ENCODE measurements at regions of chr9 and their contacts with region 1.

Region 1: GRCh38 chr9:5186416-5187169 is 1.2 kb upstream of the INSL6 start:
- DNase-seq: peak; percentile 31 to 84 (median 61)
- ATAC-seq: peak; percentile 94
- H3K4me3 ChIP-seq: no peak overlapping the region
- H3K4me3 Mint-ChIP-seq: no peak overlapping the region
- H3K27ac ChIP-seq: no peak overlapping the region
- H3K27ac Mint-ChIP-seq: no peak overlapping the region
- H3K4me1 ChIP-seq: no peaks in the 10 kb centered on the region
- H3K4me1 Mint-ChIP-seq: peaks cover 6% of the 10 kb centered on the region
- H3K27me3 ChIP-seq: no peaks in the 10 kb centered on the region
- H3K27me3 Mint-ChIP-seq: no peaks in the 10 kb centered on the region
- CTCF ChIP-seq: peak; percentile 76

Region 2: DNA sequence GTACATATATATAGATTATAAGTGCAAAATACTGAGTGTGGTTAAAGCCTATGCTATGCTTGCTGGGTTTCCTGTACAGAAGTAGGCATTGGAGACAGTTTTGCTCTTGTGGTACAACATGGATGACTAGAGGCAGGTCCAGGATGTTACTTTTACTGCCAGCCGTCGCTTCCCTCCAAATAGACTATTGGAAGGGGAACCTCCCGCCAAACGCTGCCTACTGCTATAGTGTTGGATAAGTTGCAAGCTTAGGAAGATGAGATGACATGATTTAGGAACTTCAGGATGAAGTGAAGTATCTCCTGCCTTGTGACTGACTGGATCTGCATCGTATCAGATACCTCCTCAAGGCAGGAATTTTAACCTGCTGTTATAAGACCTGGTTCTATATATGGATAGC is 170.7 kb before region 1 on chr9:
- CTCF ChIA-PET with region 1: no interaction called
- POLR2A ChIA-PET with region 1: no interaction called
- intact Hi-C with region 1: no loop called
- DNase-seq: no peak
- ATAC-seq: no peak
- H3K4me3 ChIP-seq: no peak overlapping the region
- H3K4me3 Mint-ChIP-seq: no peak overlapping the region
- H3K27ac ChIP-seq: no peak overlapping the region
- H3K27ac Mint-ChIP-seq: no peak overlapping the region
- H3K4me1 ChIP-seq: no peaks in the 10 kb centered on the region
- H3K4me1 Mint-ChIP-seq: peaks cover 19% of the 10 kb centered on the region
- H3K27me3 ChIP-seq: no peaks in the 10 kb centered on the region
- H3K27me3 Mint-ChIP-seq: no peaks in the 10 kb centered on the region
- CTCF ChIP-seq: no peak

Region 3: GRCh38 chr9:5089737-5090136 is 96.9 kb before region 1 on chr9:
- CTCF ChIA-PET with region 1: no interaction called
- POLR2A ChIA-PET with region 1: no interaction called
- intact Hi-C with region 1: no loop called
- DNase-seq: no peak
- ATAC-seq: no peak
- H3K4me3 ChIP-seq: no peak overlapping the region
- H3K4me3 Mint-ChIP-seq: no peak overlapping the region
- H3K27ac ChIP-seq: no peak overlapping the region
- H3K27ac Mint-ChIP-seq: no peak overlapping the region
- H3K4me1 ChIP-seq: no peaks in the 10 kb centered on the region
- H3K4me1 Mint-ChIP-seq: no peaks in the 10 kb centered on the region
- H3K27me3 ChIP-seq: no peaks in the 10 kb centered on the region
- H3K27me3 Mint-ChIP-seq: no peaks in the 10 kb centered on the region
- CTCF ChIP-seq: no peak

Region 4: GRCh38 chr9:5326893-5327548 is 140.4 kb after region 1 on chr9:
- CTCF ChIA-PET with region 1: interaction called, 12 read pairs
- POLR2A ChIA-PET with region 1: interaction called, 3 read pairs
- intact Hi-C with region 1: no loop called
- DNase-seq: peak in 8 of 9 experiments; percentile 26 to 85 (median 60)
- ATAC-seq: peak; percentile 96
- H3K4me3 ChIP-seq: peak overlapping the region in 1 of 2 experiments; percentile 13
- H3K4me3 Mint-ChIP-seq: peak overlapping the region; percentile 61
- H3K27ac ChIP-seq: peak overlapping the region in 1 of 2 experiments; percentile 31
- H3K27ac Mint-ChIP-seq: peak overlapping the region; percentile 89
- H3K4me1 ChIP-seq: peaks cover 10% of the 10 kb centered on the region
- H3K4me1 Mint-ChIP-seq: peaks cover 49% of the 10 kb centered on the region
- H3K27me3 ChIP-seq: no peaks in the 10 kb centered on the region
- H3K27me3 Mint-ChIP-seq: no peaks in the 10 kb centered on the region
- CTCF ChIP-seq: no peak

Region 5: GRCh38 chr9:5425006-5425628 is 238.5 kb after region 1 on chr9:
- CTCF ChIA-PET with region 1: interaction called, 87 read pairs
- POLR2A ChIA-PET with region 1: interaction called, 5 read pairs
- intact Hi-C with region 1: loop called (anchors 1 kb)
- DNase-seq: peak in 2 of 9 experiments; percentile 56 to 65
- ATAC-seq: peak; percentile 59
- H3K4me3 ChIP-seq: no peak overlapping the region
- H3K4me3 Mint-ChIP-seq: no peak overlapping the region
- H3K27ac ChIP-seq: no peak overlapping the region
- H3K27ac Mint-ChIP-seq: no peak overlapping the region
- H3K4me1 ChIP-seq: no peaks in the 10 kb centered on the region
- H3K4me1 Mint-ChIP-seq: peaks cover 9% of the 10 kb centered on the region
- H3K27me3 ChIP-seq: no peaks in the 10 kb centered on the region
- H3K27me3 Mint-ChIP-seq: no peaks in the 10 kb centered on the region
- CTCF ChIP-seq: peak; percentile 88

Region 6: DNA sequence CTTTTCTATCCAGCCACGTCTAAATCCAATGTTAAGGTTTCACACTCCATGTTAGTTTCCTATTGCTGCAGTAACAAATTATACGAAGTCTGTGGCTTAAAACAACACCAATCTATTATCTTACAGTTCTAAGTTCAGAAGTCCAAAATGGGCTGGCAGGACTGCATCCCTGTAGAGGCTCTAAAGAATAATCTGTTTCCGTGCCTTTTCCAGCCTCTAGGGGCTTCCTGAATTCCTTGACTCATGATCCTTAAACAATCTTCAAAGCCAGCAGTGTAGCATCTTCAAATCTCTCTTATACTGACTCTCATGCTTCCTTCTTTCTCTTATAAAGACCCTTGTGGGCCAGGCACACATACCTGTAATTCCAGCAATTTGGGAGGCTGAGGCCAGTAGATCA is 244.3 kb after region 1 on chr9:
- CTCF ChIA-PET with region 1: interaction called, 97 read pairs
- POLR2A ChIA-PET with region 1: interaction called, 5 read pairs
- intact Hi-C with region 1: no loop called
- DNase-seq: no peak
- ATAC-seq: no peak
- H3K4me3 ChIP-seq: no peak overlapping the region
- H3K4me3 Mint-ChIP-seq: no peak overlapping the region
- H3K27ac ChIP-seq: no peak overlapping the region
- H3K27ac Mint-ChIP-seq: no peak overlapping the region
- H3K4me1 ChIP-seq: no peaks in the 10 kb centered on the region
- H3K4me1 Mint-ChIP-seq: peaks cover 9% of the 10 kb centered on the region
- H3K27me3 ChIP-seq: no peaks in the 10 kb centered on the region
- H3K27me3 Mint-ChIP-seq: no peaks in the 10 kb centered on the region
- CTCF ChIP-seq: no peak

Region 7: GRCh38 chr9:5582835-5583195 is 396.2 kb after region 1 on chr9:
- CTCF ChIA-PET with region 1: interaction called, 58 read pairs
- POLR2A ChIA-PET with region 1: no interaction called
- intact Hi-C with region 1: no loop called
- DNase-seq: peak in 6 of 9 experiments; percentile 4 to 62 (median 40)
- ATAC-seq: peak; percentile 85
- H3K4me3 ChIP-seq: no peak overlapping the region
- H3K4me3 Mint-ChIP-seq: no peak overlapping the region
- H3K27ac ChIP-seq: no peak overlapping the region
- H3K27ac Mint-ChIP-seq: peak overlapping the region; percentile 46
- H3K4me1 ChIP-seq: peaks cover 31% of the 10 kb centered on the region
- H3K4me1 Mint-ChIP-seq: peaks cover 45% of the 10 kb centered on the region
- H3K27me3 ChIP-seq: no peaks in the 10 kb centered on the region
- H3K27me3 Mint-ChIP-seq: no peaks in the 10 kb centered on the region
- CTCF ChIP-seq: no peak

Region 8: GRCh38 chr9:5593904-5594303 is 407.3 kb after region 1 on chr9:
- CTCF ChIA-PET with region 1: interaction called, 58 read pairs
- POLR2A ChIA-PET with region 1: no interaction called
- intact Hi-C with region 1: loop called (anchors 1 to 2 kb)
- DNase-seq: peak in 1 of 9 experiments; percentile 17
- ATAC-seq: no peak
- H3K4me3 ChIP-seq: no peak overlapping the region
- H3K4me3 Mint-ChIP-seq: no peak overlapping the region
- H3K27ac ChIP-seq: no peak overlapping the region
- H3K27ac Mint-ChIP-seq: no peak overlapping the region
- H3K4me1 ChIP-seq: no peaks in the 10 kb centered on the region
- H3K4me1 Mint-ChIP-seq: peaks cover 6% of the 10 kb centered on the region
- H3K27me3 ChIP-seq: no peaks in the 10 kb centered on the region
- H3K27me3 Mint-ChIP-seq: no peaks in the 10 kb centered on the region
- CTCF ChIP-seq: no peak

Measured in CD8-positive, alpha-beta T cell (primary cell).